Breast epithelium (tissue), 4 donors: ENCODE measurements at regions of chr13 and their contacts with region 1.

Region 1: GRCh38 chr13:27559714-27560113 is 60.6 kb downstream of the LNX2 start:
- DNase-seq: no peak
- H3K4me3 ChIP-seq: no peak overlapping the region
- H3K27ac ChIP-seq: no peak overlapping the region
- H3K4me1 ChIP-seq: no peaks in the 10 kb centered on the region
- H3K27me3 ChIP-seq: no peaks in the 10 kb centered on the region
- CTCF ChIP-seq: no peak
- POLR2A ChIP-seq: no peak

Region 2: DNA sequence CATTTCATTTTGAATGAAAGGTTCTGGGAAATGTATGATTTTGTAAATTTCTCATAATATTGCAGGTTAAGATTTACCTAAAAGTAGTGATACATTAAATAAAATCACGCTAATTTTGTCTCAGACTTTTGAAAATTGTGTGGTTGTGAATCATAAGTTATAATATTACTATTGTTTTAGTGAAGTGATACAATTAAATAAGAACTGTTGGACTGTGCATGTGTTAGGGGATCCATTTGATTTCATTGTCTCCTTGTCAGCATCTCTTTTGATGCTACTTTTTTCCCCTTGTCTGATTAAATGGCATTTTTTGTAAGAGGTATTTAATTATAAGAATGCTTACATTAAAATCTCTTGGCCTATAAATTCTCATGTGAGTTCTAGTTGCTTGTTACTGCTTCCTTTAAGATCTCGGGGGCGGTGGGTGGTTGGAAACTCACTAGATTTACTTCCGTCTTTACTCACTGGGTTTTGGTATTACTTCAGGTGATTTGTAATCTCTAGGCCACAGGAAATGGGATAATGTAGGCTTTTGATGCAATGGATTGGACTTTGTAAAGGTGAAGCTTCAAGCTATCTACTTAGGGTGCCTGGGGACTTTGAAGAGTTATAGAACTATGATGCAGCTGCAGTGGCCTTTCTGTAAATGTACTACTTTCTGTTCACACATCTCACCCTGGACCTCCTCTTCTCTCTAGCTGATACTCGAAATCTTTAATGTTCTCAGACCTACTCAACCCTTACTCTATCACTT is 645.2 kb after region 1 on chr13:
- intact Hi-C with region 1: loop called (anchors 10 kb)
- DNase-seq: no peak
- H3K4me3 ChIP-seq: no peak overlapping the region
- H3K27ac ChIP-seq: no peak overlapping the region
- H3K4me1 ChIP-seq: no peaks in the 10 kb centered on the region
- H3K27me3 ChIP-seq: no peaks in the 10 kb centered on the region
- CTCF ChIP-seq: no peak
- POLR2A ChIP-seq: no peak

Region 3: DNA sequence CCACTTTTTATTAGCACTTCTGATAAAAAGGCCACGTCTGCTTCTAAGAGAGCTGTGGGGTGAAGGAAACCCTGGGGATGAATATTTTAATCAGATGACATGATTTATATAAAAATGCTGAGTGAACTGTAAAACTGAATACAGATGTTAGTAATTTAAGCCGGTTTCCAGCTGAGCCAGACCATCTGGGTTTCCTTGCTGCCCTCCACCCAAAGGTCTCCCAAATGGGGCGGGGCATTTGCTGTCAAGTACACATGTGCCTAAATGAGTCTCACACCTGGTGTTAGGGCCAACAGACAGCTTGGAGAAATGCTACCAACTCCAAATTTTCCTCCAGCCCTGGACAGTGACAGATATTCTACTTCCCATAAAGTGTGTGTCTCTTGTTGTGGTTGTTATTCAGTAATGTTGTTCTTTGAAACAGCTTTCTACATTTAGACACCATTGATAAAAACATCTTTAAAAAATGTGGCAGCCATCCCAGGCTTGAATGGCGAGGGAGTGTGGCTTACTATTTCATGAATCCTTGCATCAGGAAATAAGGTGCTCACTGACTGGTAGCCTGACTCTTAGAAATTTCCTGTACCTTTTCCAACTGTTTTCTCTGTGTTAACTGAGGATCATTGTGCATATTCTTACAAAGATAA is 1610.8 kb after region 1 on chr13:
- intact Hi-C with region 1: no loop called
- DNase-seq: no peak
- H3K4me3 ChIP-seq: no peak overlapping the region
- H3K27ac ChIP-seq: no peak overlapping the region
- H3K4me1 ChIP-seq: no peaks in the 10 kb centered on the region
- H3K27me3 ChIP-seq: no peaks in the 10 kb centered on the region
- CTCF ChIP-seq: no peak
- POLR2A ChIP-seq: no peak